Heart left ventricle (tissue), 16 donors: ENCODE measurements at regions of chr2 and their contacts with region 1.

Region 1: GRCh38 chr2:62195421-62196277 is at the start of gene B3GNT2:
- DNase-seq: peak; percentile 85 to 94 (median 88)
- ATAC-seq: peak; percentile 76 to 93 (median 90)
- H3K4me3 ChIP-seq: peak within 1 kb of the TSS; percentile 86 to 99 (median 94)
- H3K27ac ChIP-seq: peak within 1 kb of the TSS; percentile 91 to 98 (median 96)
- H3K4me1 ChIP-seq: peaks cover 0 to 45% (median 32%) of the 10 kb centered on the region in 12 donors
- H3K27me3 ChIP-seq: no peaks in the 10 kb centered on the region
- CTCF ChIP-seq: no peak
- POLR2A ChIP-seq: peak; percentile 72 to 97
- total RNA-seq, gene B3GNT2: 13.8 to 26.5 (median 20.8) TPM

Region 2: GRCh38 chr2:61910603-61911002 is 285.0 kb before region 1 on chr2:
- intact Hi-C with region 1: loop called in 4 of 10 experiments (anchors 5 to 10 kb)
- DNase-seq: no peak
- ATAC-seq: no peak
- H3K4me3 ChIP-seq: no peak overlapping the region
- H3K27ac ChIP-seq: no peak overlapping the region
- H3K4me1 ChIP-seq: peaks cover 0 to 45% (median 17%) of the 10 kb centered on the region in 12 donors
- H3K27me3 ChIP-seq: no peaks in the 10 kb centered on the region
- CTCF ChIP-seq: peak in 4 of 12 donors; percentile 16 to 23 (median 17)
- POLR2A ChIP-seq: no peak

Region 3: DNA sequence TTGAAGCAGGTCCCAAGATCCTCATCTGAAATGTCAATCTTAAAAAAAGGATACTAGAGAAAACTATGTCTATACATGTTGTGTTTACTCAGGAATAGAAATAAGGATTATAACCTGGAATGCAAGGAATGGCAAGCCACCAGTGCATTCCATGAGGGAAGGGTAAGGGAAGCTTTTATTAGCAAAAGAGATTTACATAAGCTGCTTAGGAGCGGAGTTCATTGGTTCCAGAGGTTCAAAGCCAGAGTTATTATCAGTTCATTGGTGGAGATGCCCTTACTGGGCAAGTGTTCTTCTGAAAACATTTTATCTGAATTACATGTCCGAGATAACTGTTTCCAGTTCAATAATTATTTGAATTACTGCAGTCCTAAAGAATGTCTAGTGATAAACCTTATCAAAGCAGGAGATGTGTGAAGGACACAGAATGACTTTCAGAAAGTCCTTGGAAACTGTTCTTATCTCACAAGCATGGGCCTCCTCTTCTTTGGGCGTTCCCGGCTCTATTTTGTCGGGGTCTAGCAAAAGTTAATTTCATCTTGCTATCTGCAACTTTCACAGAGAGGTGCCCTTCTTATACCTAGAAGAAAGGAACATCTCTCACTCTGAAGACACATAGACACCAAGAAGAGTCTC is 266.7 kb before region 1 on chr2:
- intact Hi-C with region 1: loop called in 2 of 10 experiments (anchors 10 kb)
- DNase-seq: no peak
- ATAC-seq: peak in 2 of 4 donors; percentile 45 to 72
- H3K4me3 ChIP-seq: no peak overlapping the region
- H3K27ac ChIP-seq: peak overlapping the region in 8 of 12 donors; percentile 28 to 82 (median 70)
- H3K4me1 ChIP-seq: peaks cover 0 to 15% (median 2%) of the 10 kb centered on the region in 12 donors
- H3K27me3 ChIP-seq: no peaks in the 10 kb centered on the region
- CTCF ChIP-seq: no peak
- POLR2A ChIP-seq: no peak

Region 4: GRCh38 chr2:62007555-62007954 is 188.1 kb before region 1 on chr2:
- intact Hi-C with region 1: loop called in 7 of 10 experiments (anchors 5 to 10 kb)
- DNase-seq: no peak
- ATAC-seq: no peak
- H3K4me3 ChIP-seq: no peak overlapping the region
- H3K27ac ChIP-seq: peak overlapping the region in 3 of 12 donors; percentile 34 to 56 (median 36)
- H3K4me1 ChIP-seq: peaks cover 0 to 26% (median 2%) of the 10 kb centered on the region in 12 donors
- H3K27me3 ChIP-seq: no peaks in the 10 kb centered on the region
- CTCF ChIP-seq: no peak
- POLR2A ChIP-seq: no peak

Region 5: DNA sequence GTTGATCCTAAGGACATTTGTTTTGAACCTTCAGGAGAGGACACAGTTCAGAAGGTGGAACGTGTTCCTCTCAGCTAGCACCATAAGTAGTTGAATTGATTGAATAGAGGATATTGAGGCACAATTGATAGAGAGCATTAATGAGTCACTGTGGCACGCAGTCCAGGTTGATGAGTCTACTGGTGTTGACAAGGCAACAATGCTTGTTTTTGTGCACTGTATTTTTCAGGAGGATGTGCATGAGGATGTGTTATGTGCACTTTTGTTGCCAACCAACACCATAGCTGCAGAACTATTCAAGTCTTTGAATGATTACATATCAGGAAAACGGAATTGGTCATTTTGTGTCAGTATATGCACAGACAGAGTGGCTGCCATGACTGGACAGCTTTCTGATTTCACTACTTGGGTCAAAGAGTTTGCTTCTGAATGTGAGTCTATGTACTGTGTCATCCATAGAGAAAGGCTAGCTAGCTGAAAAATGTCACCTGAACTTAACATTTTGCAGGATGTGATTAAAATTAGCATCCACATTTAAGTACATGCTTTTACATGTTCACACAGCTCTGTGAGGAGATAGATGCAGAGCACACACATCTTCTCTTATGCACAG is 139.8 kb before region 1 on chr2:
- intact Hi-C with region 1: no loop called
- DNase-seq: no peak
- ATAC-seq: no peak
- H3K4me3 ChIP-seq: no peak overlapping the region
- H3K27ac ChIP-seq: no peak overlapping the region
- H3K4me1 ChIP-seq: peaks cover 0 to 14% (median 5%) of the 10 kb centered on the region in 12 donors
- H3K27me3 ChIP-seq: no peaks in the 10 kb centered on the region
- CTCF ChIP-seq: no peak
- POLR2A ChIP-seq: no peak

Region 6: DNA sequence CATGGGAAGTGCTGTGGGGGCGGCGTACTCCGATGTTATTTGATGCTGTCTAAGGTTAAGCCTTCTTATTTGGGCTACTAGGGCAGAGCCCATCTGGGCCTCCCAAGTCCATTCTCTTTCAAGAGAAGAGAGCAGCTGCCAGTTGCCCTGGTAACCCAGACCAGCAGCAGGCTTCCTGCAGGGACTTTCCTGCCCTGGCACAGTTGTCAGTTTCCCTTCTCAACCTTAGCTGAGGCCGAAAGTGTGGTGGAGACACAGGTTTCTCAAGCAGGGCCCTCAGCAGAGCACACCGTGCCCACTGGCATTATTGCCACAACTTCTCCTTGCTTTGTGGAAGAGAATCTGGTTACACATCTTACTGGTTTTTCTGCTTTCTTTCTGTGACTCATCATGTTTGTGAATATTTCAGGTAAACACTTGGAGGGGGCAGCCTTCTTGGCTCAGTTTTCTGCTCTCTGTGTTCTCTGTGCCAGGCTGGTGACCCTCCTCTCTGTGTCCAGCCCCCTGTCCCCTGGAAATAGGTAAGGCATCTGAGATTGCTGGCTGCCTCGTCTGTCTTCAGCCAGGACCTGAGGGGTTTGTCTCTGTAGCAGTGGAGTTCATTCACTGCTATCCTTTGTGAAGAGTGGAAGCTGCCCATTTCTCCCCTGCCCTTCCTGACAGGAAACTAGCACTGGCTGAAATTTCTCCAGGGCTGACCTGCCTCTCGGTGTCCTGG is 111.3 kb after region 1 on chr2:
- intact Hi-C with region 1: loop called in 4 of 10 experiments (anchors 5 to 10 kb)
- DNase-seq: no peak
- ATAC-seq: peak in 1 of 4 donors; percentile 29
- H3K4me3 ChIP-seq: no peak overlapping the region
- H3K27ac ChIP-seq: peak overlapping the region in 7 of 12 donors; percentile 4 to 61 (median 22)
- H3K4me1 ChIP-seq: peaks cover 6 to 82% (median 47%) of the 10 kb centered on the region in 12 donors
- H3K27me3 ChIP-seq: no peaks in the 10 kb centered on the region
- CTCF ChIP-seq: no peak
- POLR2A ChIP-seq: no peak

Region 7: DNA sequence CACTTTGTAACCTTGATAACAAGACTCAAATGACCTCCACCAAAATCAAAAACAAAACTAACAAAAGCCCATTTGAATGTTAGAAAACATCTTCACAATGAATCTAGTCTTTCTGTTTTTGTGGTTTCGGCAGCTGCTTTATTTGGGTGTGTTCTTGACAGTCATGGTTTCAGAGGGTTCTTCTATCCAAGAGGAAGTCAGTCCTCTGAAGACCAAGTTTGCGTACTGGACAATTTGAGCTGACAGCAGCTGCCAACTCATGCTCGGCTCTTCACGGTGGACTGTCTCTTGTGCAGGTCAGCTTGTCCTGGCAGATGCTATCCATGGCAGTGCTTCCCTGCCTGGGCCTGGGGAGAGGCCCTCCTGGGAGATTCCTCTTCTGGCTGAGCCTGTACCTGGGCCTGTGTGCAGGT is 219.4 kb after region 1 on chr2:
- intact Hi-C with region 1: loop called in 6 of 10 experiments (anchors 2 to 10 kb)
- DNase-seq: peak in 1 of 5 donors; percentile 40
- ATAC-seq: peak in 1 of 4 donors; percentile 16
- H3K4me3 ChIP-seq: no peak overlapping the region
- H3K27ac ChIP-seq: no peak overlapping the region
- H3K4me1 ChIP-seq: peaks cover 5 to 26% (median 19%) of the 10 kb centered on the region in 12 donors
- H3K27me3 ChIP-seq: no peaks in the 10 kb centered on the region
- CTCF ChIP-seq: no peak
- POLR2A ChIP-seq: no peak